ENCODE measurements at regions of chr16 and their contacts with region 1.

Region 1: GRCh38 chr16:66830422-66831404 is at the start of gene NAE1:
- H3K4me3 ChIP-seq: peak within 1 kb of the TSS; percentile 75
- H3K27ac ChIP-seq: peak within 1 kb of the TSS; percentile 88
- H3K4me1 ChIP-seq: peaks cover 5% of the 10 kb centered on the region; the same call in 1 of the 2 replicates
- CTCF ChIP-seq: peak; percentile 99

Region 2: DNA sequence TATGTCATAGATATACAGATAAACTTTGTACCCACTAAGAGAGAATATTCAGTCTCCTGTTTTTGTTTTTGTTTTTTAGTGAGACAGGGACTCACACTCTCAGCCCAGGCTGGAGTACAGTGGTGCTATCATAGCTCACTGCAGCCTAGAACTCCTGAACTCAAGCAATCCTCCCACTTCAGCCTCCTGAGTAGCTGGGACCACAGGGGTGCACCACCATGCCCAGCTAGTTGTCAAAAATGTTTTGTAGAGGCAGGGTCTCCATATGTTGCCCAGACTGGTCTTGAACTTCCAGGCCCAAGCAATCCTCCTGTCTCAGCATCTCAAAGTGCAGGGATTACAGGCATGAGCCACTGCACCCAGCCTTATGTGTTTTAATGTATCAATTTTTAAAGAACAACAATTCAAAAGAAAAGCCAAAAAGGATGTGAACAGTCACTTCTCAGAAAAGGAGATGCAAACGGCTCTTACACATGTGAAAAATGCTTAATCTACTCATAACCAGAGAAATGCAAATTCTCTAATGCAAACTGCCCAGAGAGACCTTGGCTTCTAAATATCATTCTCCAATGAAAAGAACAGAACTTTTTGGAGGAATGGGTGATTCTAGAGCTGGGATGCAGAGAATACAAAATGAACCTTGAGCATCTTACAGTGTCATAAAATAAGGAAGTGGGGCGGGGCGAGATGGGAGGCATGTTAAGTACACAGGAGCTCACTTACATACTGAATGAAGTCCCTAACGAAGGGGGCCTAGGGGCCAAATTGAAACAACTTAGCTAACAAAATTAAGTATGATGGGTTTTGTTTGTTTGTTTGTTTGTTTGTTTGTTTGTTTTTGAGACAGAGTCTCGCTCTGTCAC is 233.5 kb before region 1 on chr16:
- CTCF ChIA-PET with region 1: no interaction called
- POLR2A ChIA-PET with region 1: no interaction called
- H3K4me3 ChIP-seq: no peak overlapping the region
- H3K27ac ChIP-seq: no peak overlapping the region
- H3K4me1 ChIP-seq: no peaks in the 10 kb centered on the region
- CTCF ChIP-seq: no peak

Region 3: GRCh38 chr16:66751303-66751991 is 79.3 kb before region 1 on chr16 and contains the start of gene DYNC1LI2:
- CTCF ChIA-PET with region 1: interaction called, 16 read pairs
- POLR2A ChIA-PET with region 1: no interaction called
- H3K4me3 ChIP-seq: peak within 1 kb of the TSS; percentile 87
- H3K27ac ChIP-seq: peak within 1 kb of the TSS; percentile 98
- H3K4me1 ChIP-seq: peaks cover 6% of the 10 kb centered on the region
- CTCF ChIP-seq: 0 out of 2 replicates have a peak, but pooled peaks have one; percentile 32

Region 4: GRCh38 chr16:66811043-66811442 is 19.7 kb before region 1 on chr16:
- CTCF ChIA-PET with region 1: interaction called, 19 read pairs
- POLR2A ChIA-PET with region 1: interaction called, 8 read pairs
- H3K4me3 ChIP-seq: no peak overlapping the region
- H3K27ac ChIP-seq: no peak overlapping the region
- H3K4me1 ChIP-seq: no peaks in the 10 kb centered on the region
- CTCF ChIP-seq: no peak

Region 5: GRCh38 chr16:66844342-66845079 is 13.8 kb after region 1 on chr16 and contains the start of gene CA7:
- CTCF ChIA-PET with region 1: interaction called, 42 read pairs
- POLR2A ChIA-PET with region 1: interaction called, 7 read pairs
- H3K4me3 ChIP-seq: peak within 1 kb of the TSS; percentile 13
- H3K27ac ChIP-seq: no peak within 1 kb of the TSS
- H3K4me1 ChIP-seq: no peaks in the 10 kb centered on the region
- CTCF ChIP-seq: no peak

Region 6: DNA sequence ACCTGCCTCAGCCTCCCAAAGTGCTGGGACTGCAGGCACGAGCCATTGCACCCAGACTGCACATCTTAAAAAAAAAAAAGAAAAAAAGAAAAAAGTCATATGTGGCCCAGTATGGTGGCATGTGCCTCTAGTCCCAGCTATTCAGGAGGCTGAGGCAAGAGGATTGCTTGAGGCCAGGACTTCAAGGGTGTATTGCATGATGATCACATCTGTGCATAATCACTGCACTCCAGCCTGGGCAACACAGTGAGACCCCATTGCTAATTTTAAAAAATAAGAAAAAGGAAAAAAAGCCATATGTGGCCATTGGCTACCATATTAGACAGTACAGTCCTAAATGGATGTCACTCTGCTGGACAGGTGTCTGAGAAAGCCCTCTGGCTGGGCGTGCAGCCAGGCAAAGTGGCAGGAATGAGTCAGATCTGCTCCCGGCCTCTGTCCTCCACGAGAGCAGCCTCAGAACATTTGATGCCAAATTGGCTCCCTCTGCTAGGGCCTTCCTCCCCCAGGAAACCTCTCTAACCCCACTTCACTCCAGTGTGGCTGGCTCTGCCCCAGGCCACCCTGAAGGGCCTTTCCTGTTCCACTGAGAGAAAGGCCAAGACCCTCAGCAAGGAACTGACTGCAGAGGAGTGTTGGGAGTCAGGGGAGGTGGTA is 28.2 kb after region 1 on chr16:
- CTCF ChIA-PET with region 1: interaction called, 27 read pairs
- POLR2A ChIA-PET with region 1: interaction called, 5 read pairs
- H3K4me3 ChIP-seq: no peak overlapping the region
- H3K27ac ChIP-seq: no peak overlapping the region
- H3K4me1 ChIP-seq: no peaks in the 10 kb centered on the region
- CTCF ChIP-seq: no peak

Region 7: DNA sequence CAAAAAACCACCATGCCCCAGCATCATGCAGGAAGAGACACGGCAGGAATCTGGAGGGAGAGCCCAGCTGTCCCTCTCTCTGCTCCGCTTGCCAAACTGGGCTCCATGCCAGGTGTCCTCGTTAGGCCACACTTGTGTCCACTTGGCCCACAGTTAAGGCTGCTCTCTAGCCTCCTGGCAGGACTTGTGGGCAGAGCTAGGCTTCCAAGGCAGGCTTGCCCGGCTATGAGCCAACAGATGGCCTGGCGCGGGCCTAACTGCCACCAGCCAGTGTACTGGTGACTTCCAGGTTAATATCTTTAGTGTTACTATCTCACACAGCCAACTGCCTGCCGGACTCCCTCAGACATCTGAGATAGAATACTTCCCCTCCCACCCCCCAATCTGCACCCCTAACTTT is 639.6 kb after region 1 on chr16:
- CTCF ChIA-PET with region 1: no interaction called
- POLR2A ChIA-PET with region 1: no interaction called
- H3K4me3 ChIP-seq: no peak overlapping the region
- H3K27ac ChIP-seq: no peak overlapping the region
- H3K4me1 ChIP-seq: peaks cover 6% of the 10 kb centered on the region; the same call in 1 of the 2 replicates
- CTCF ChIP-seq: no peak